Head of caudate nucleus (tissue), 42 donors: ENCODE measurements at regions of chr3 and their contacts with region 1.

Region 1: DNA sequence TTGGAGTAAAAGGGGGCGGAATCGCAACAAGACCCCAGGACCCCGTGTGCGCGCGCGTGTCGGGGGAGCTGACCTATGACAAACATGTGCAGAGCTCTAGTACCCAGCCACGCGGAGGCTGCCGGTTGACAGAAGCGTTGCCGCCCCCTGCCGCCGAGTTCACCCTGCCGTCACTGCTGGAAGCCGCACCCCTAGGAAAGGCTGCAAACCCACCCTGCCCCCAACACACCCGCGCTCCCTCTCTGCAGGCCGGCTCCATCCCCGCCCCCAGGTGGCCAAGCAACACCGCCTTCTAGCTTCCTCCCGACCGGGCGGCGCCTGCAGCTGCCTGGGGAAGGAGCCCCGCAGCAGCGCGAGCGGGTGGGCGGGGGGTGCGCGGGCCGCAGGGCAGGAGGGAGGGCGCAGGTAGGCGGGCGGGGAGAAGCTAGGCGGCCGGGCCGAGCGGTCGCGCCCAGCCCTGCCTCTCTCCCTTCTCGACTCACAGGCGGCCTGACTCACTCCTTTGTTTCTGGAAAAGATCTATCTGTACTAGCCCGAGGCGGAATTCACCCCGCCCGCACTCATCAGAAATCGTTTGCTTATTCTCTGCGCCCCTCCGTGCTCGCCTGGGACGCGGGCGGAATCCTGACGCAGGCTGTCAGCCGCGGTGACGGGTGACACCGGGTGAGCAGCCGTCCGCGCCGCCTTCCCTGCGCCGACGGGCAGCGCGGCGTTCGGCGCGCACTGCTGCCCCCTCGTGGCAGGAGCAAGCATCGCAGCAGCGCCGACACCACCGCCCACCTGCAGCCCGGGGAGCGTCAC is 160.8 kb downstream of the GAP43 start:
- DNase-seq: peak; percentile 67 to 94 (median 86)

Region 2: GRCh38 chr3:115239717-115240116 is 544.4 kb before region 1 on chr3:
- intact Hi-C with region 1: loop called (anchors 10 kb)
- DNase-seq: peak; percentile 45 to 95 (median 76)